GM12878 (cell line): ENCODE measurements at regions of chr20 and their contacts with region 1.

Region 1: DNA sequence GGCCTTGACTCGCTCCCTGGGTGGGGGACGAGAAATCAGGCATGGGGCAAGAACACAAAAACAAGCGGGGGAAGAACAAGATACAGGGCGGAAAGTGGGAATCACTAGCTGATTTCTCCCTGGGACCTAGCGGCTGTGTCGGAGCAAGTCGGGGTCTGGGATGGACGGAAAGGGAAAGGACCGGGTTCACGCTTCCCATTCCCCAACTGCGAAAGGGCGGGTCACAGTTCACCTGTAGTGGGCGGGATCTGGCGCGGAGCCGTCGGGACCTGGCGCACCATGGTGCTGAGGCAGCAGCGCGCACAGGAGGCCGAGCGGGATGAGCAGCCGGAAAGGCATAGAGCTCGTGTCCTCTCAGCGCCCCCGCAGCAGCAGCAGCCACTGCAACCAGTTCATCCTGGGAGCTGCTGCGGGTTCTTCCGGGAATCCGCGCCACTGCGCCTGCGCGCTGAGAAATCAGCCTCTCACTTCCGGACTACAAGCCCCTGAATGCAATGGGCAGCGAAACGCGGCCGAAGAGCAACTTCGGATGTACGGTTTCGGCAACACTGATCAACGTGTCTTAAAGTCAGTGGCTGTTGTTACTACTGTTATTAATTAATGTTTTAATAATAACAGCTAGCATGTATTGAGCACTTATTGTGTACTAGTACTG is at the start of gene EDEM2:
- DNase-seq: peak; percentile 88
- ATAC-seq: peak; percentile 91
- H3K4me3 ChIP-seq: peak within 1 kb of the TSS; percentile 88
- H3K27ac ChIP-seq: peak within 1 kb of the TSS; percentile 69
- H3K4me1 ChIP-seq: peaks cover 13% of the 10 kb centered on the region
- H3K27me3 ChIP-seq: no peaks in the 10 kb centered on the region
- CTCF ChIP-seq: no peak
- EP300 ChIP-seq: no peak
- POLR2A ChIP-seq: peak; percentile 91
- RAD21 ChIP-seq: no peak
- polyA plus RNA-seq, gene EDEM2: 9.9 to 11.4 TPM

Region 2: GRCh38 chr20:34876162-34877001 is 270.7 kb before region 1 on chr20 and contains the start of gene ACSS2:
- CTCF ChIA-PET with region 1: interaction called, 26 read pairs
- POLR2A ChIA-PET with region 1: interaction called, 4 read pairs
- RAD21 ChIA-PET with region 1: interaction called, 8 read pairs
- SMC1A ChIA-PET with region 1: interaction called, 7 read pairs
- in situ Hi-C with region 1: no loop called
- intact Hi-C with region 1: no loop called
- DNase-seq: peak; percentile 83
- ATAC-seq: peak; percentile 83
- H3K4me3 ChIP-seq: peak within 1 kb of the TSS; percentile 91
- H3K27ac ChIP-seq: no peak within 1 kb of the TSS
- H3K4me1 ChIP-seq: peaks cover 17% of the 10 kb centered on the region
- H3K27me3 ChIP-seq: no peaks in the 10 kb centered on the region; a peak in 1 of 4 replicates
- CTCF ChIP-seq: no peak
- EP300 ChIP-seq: no peak
- POLR2A ChIP-seq: peak; percentile 61
- RAD21 ChIP-seq: no peak
- polyA plus RNA-seq, gene ACSS2: 11.1 to 15.9 TPM

Region 3: DNA sequence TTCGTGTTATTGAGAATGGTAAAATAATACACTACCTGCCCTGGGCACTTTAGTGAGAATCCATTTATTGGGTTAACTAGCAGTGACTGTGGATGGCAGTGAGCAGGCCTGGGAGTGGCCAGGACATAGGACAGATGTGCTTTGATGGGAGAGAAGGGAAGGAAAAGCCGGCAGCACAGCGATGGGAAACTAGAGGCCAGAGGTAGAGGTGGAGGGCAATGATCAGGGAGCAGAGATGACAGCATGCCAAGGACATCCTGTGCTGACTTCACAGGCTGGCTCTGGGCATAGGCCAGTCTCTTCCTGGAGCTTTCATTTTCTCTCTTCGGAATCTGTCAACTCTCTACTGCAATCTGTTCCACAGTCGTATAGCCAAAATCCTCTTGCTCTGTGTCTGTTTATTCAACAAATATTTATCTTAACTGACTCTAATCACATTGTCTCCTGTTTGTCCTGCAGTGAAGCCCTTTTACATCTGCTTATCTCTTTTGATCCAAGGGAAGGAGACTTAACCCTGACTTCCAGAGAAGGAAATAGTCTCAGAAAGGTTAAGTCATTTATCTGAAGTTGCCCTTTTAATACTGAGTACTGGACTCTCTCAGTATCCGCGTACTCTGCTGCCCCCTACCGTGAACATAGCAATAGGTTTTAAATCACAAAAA is 61.0 kb after region 1 on chr20:
- CTCF ChIA-PET with region 1: interaction called, 39 read pairs
- POLR2A ChIA-PET with region 1: no interaction called
- RAD21 ChIA-PET with region 1: interaction called, 15 read pairs
- SMC1A ChIA-PET with region 1: interaction called, 18 read pairs
- in situ Hi-C with region 1: no loop called
- intact Hi-C with region 1: loop called (anchors 1 kb)
- DNase-seq: peak; percentile 20
- ATAC-seq: peak; percentile 97
- H3K4me3 ChIP-seq: no peak overlapping the region
- H3K27ac ChIP-seq: no peak overlapping the region
- H3K4me1 ChIP-seq: no peaks in the 10 kb centered on the region
- H3K27me3 ChIP-seq: no peaks in the 10 kb centered on the region
- CTCF ChIP-seq: peak; percentile 66 to 89 (median 71)
- EP300 ChIP-seq: no peak
- POLR2A ChIP-seq: no peak
- RAD21 ChIP-seq: peak; percentile 94

Region 4: DNA sequence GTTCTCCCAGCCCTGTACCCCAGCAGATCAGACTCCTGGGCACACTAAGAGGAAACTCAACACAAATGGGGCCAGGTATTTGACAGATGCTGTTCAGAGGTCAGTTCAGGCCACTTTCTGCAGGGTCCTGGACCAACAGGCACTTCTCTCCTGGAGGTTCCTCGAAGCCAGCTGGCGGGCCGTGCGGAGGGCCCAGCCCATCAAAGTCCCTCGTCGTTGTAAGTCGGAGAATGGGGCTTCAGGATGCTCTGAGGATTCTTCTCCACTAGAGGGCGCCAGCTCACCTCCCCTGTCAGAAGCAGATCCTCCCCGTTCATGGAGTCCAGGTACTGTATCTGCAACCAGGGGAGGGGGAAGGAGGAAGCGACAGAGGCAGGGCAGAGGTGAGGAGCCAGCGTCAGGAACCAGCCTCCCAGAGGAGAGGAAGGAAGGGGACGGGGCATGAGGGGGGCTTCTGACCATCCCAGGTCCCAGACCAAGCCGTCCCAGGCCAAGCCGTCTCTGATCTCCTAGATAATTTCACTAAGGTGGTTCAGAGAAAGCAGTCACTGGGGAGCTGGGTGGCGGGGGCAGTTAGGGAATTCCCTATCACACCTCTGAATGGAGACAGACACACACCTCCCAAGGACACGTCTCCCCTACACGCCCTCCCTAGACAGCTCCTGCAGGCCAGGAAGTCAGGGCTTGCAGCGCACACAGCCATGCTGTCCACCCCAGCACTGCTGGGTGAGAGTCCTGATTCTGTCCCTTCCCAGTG is 156.9 kb after region 1 on chr20:
- CTCF ChIA-PET with region 1: interaction called, 17 read pairs
- POLR2A ChIA-PET with region 1: no interaction called
- RAD21 ChIA-PET with region 1: interaction called, 6 read pairs
- SMC1A ChIA-PET with region 1: interaction called, 3 read pairs
- in situ Hi-C with region 1: no loop called
- intact Hi-C with region 1: no loop called
- DNase-seq: peak; percentile 31
- ATAC-seq: peak; percentile 98
- H3K4me3 ChIP-seq: no peak overlapping the region
- H3K27ac ChIP-seq: no peak overlapping the region
- H3K4me1 ChIP-seq: peaks cover 3% of the 10 kb centered on the region
- H3K27me3 ChIP-seq: no peaks in the 10 kb centered on the region
- CTCF ChIP-seq: peak; percentile 93 to 94 (median 94)
- EP300 ChIP-seq: no peak
- POLR2A ChIP-seq: no peak
- RAD21 ChIP-seq: peak; percentile 92

Region 5: GRCh38 chr20:35447082-35447789 is 300.2 kb after region 1 on chr20:
- CTCF ChIA-PET with region 1: interaction called, 6 read pairs
- POLR2A ChIA-PET with region 1: no interaction called
- RAD21 ChIA-PET with region 1: interaction called, 5 read pairs
- SMC1A ChIA-PET with region 1: interaction called, 3 read pairs
- in situ Hi-C with region 1: loop called (anchors 10 kb)
- intact Hi-C with region 1: loop called (anchors 10 kb)
- DNase-seq: peak; percentile 40
- ATAC-seq: peak; percentile 99
- H3K4me3 ChIP-seq: peak overlapping the region; percentile 80
- H3K27ac ChIP-seq: no peak overlapping the region
- H3K4me1 ChIP-seq: no peaks in the 10 kb centered on the region; the same call in 1 of the 2 replicates
- H3K27me3 ChIP-seq: no peaks in the 10 kb centered on the region
- CTCF ChIP-seq: peak; percentile 76 to 98 (median 93)
- EP300 ChIP-seq: no peak
- POLR2A ChIP-seq: no peak
- RAD21 ChIP-seq: peak; percentile 62

Region 6: GRCh38 chr20:35478804-35479472 is 331.9 kb after region 1 on chr20:
- CTCF ChIA-PET with region 1: no interaction called
- POLR2A ChIA-PET with region 1: no interaction called
- RAD21 ChIA-PET with region 1: no interaction called
- SMC1A ChIA-PET with region 1: no interaction called
- in situ Hi-C with region 1: no loop called
- intact Hi-C with region 1: no loop called
- DNase-seq: no peak
- ATAC-seq: peak; percentile 46; the same call in 2 of the 3 replicates
- H3K4me3 ChIP-seq: no peak overlapping the region
- H3K27ac ChIP-seq: no peak overlapping the region
- H3K4me1 ChIP-seq: peaks cover 3% of the 10 kb centered on the region; the same call in 1 of the 2 replicates
- H3K27me3 ChIP-seq: no peaks in the 10 kb centered on the region
- CTCF ChIP-seq: peak; percentile 35 to 53 (median 49)
- EP300 ChIP-seq: no peak
- POLR2A ChIP-seq: peak; percentile 24; the same call in 1 of the 2 replicates
- RAD21 ChIP-seq: peak; percentile 63